GM12878 (cell line): ENCODE measurements at regions of chr20 and their contacts with region 1.

Region 1: DNA sequence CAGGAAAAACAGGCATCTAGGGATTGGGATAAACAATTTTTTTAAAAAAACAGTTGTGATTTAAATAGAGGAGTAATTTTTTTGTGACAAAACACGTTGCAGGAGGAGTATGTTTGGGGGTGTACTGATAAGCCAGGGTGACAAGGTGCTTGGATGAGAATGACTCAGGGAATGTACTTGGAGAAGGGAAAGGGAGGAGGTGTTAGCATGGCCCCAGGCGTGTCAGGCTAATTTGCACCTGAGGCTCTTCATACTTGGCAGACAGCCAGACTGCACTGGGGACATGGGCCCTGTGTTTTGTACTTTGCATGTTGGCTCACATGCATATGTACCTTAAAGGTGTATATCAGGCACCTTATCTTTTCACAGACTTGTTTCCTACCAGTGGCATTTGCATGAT is 22.8 kb downstream of the PANK2 start:
- DNase-seq: no peak
- ATAC-seq: no peak
- H3K4me3 ChIP-seq: no peak overlapping the region
- H3K27ac ChIP-seq: no peak overlapping the region
- H3K4me1 ChIP-seq: peaks cover 26% of the 10 kb centered on the region
- H3K27me3 ChIP-seq: no peaks in the 10 kb centered on the region
- CTCF ChIP-seq: no peak
- EP300 ChIP-seq: no peak
- POLR2A ChIP-seq: 0 out of 2 replicates have a peak, but pooled peaks have one; percentile 21
- RAD21 ChIP-seq: no peak

Region 2: DNA sequence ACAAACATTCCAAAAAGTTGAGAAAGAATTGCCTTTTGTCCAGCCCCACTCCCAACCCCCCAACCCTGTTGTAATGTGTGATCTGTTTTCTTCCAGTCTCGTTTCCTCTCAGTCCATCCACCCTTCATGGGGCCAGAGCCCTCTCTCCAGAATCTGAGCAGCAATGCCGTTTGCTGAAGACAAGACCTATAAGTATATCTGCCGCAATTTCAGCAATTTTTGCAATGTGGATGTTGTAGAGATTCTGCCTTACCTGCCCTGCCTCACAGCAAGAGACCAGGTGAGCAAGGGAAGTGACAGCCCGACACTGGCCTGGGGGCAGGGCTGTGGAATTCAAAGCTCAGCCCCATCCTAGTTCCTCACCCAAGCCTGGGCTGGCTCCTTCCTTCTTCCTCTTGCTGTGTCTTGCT is 57.5 kb before region 1 on chr20:
- CTCF ChIA-PET with region 1: no interaction called
- POLR2A ChIA-PET with region 1: no interaction called
- RAD21 ChIA-PET with region 1: no interaction called
- SMC1A ChIA-PET with region 1: no interaction called
- in situ Hi-C with region 1: no loop called
- intact Hi-C with region 1: no loop called
- DNase-seq: no peak
- ATAC-seq: peak; percentile 40
- H3K4me3 ChIP-seq: no peak overlapping the region
- H3K27ac ChIP-seq: no peak overlapping the region
- H3K4me1 ChIP-seq: no peaks in the 10 kb centered on the region
- H3K27me3 ChIP-seq: no peaks in the 10 kb centered on the region
- CTCF ChIP-seq: no peak
- EP300 ChIP-seq: no peak
- POLR2A ChIP-seq: no peak
- RAD21 ChIP-seq: no peak

Region 3: GRCh38 chr20:3901028-3901705 is 10.8 kb before region 1 on chr20:
- CTCF ChIA-PET with region 1: interaction called, 9 read pairs
- POLR2A ChIA-PET with region 1: interaction called, 68 read pairs
- RAD21 ChIA-PET with region 1: interaction called, 10 read pairs
- SMC1A ChIA-PET with region 1: interaction called, 69 read pairs
- in situ Hi-C with region 1: no loop called
- intact Hi-C with region 1: no loop called
- DNase-seq: no peak
- ATAC-seq: no peak
- H3K4me3 ChIP-seq: no peak overlapping the region
- H3K27ac ChIP-seq: peak overlapping the region; percentile 31; the same call in 1 of the 2 replicates
- H3K4me1 ChIP-seq: peaks cover 32% of the 10 kb centered on the region
- H3K27me3 ChIP-seq: no peaks in the 10 kb centered on the region
- CTCF ChIP-seq: no peak
- EP300 ChIP-seq: no peak
- POLR2A ChIP-seq: no peak
- RAD21 ChIP-seq: no peak